Calu3 (cell line): ENCODE measurements at regions of chr2 and their contacts with region 1.

Region 1: GRCh38 chr2:105582952-105583660 is 161.6 kb upstream of the NCK2 start:
- DNase-seq: peak; percentile 77
- H3K4me3 Mint-ChIP-seq: peak overlapping the region; percentile 50
- H3K27ac Mint-ChIP-seq: peak overlapping the region; percentile 96
- H3K4me1 Mint-ChIP-seq: peaks cover 59% of the 10 kb centered on the region
- H3K27me3 Mint-ChIP-seq: no peaks in the 10 kb centered on the region
- CTCF ChIP-seq: no peak

Region 2: GRCh38 chr2:105595536-105595935 is 12.4 kb after region 1 on chr2:
- CTCF ChIA-PET with region 1: interaction called, 14 read pairs
- intact Hi-C with region 1: no loop called
- DNase-seq: peak; percentile 71
- H3K4me3 Mint-ChIP-seq: no peak overlapping the region
- H3K27ac Mint-ChIP-seq: no peak overlapping the region
- H3K4me1 Mint-ChIP-seq: peaks cover 55% of the 10 kb centered on the region
- H3K27me3 Mint-ChIP-seq: no peaks in the 10 kb centered on the region
- CTCF ChIP-seq: peak; percentile 31

Region 3: GRCh38 chr2:105617756-105618659 is 34.9 kb after region 1 on chr2:
- CTCF ChIA-PET with region 1: interaction called, 4 read pairs
- intact Hi-C with region 1: loop called (anchors 2 kb)
- DNase-seq: peak; percentile 79
- H3K4me3 Mint-ChIP-seq: peak overlapping the region; percentile 5
- H3K27ac Mint-ChIP-seq: peak overlapping the region; percentile 82
- H3K4me1 Mint-ChIP-seq: peaks cover 37% of the 10 kb centered on the region
- H3K27me3 Mint-ChIP-seq: no peaks in the 10 kb centered on the region
- CTCF ChIP-seq: no peak

Region 4: GRCh38 chr2:105744091-105744908 is 161.2 kb after region 1 on chr2:
- CTCF ChIA-PET with region 1: interaction called, 4 read pairs
- intact Hi-C with region 1: loop called (anchors 2 kb)
- DNase-seq: peak; percentile 72
- H3K4me3 Mint-ChIP-seq: peak overlapping the region; percentile 86
- H3K27ac Mint-ChIP-seq: peak overlapping the region; percentile 89
- H3K4me1 Mint-ChIP-seq: peaks cover 32% of the 10 kb centered on the region
- H3K27me3 Mint-ChIP-seq: peaks cover 12% of the 10 kb centered on the region
- CTCF ChIP-seq: no peak

Region 5: GRCh38 chr2:105919826-105920225 is 336.7 kb after region 1 on chr2:
- CTCF ChIA-PET with region 1: interaction called, 6 read pairs
- intact Hi-C with region 1: loop called (anchors 10 kb)
- DNase-seq: peak; percentile 73
- H3K4me3 Mint-ChIP-seq: peak overlapping the region; percentile 2
- H3K27ac Mint-ChIP-seq: peak overlapping the region; percentile 45
- H3K4me1 Mint-ChIP-seq: peaks cover 57% of the 10 kb centered on the region
- H3K27me3 Mint-ChIP-seq: no peaks in the 10 kb centered on the region
- CTCF ChIP-seq: peak; percentile 37